Activated CD4-positive, alpha-beta T cell treated with anti-CD3 and anti-CD28 coated beads, Interleukin-2, amount 10 ng/mL, durations not matched to agents 24 days and 14 days (primary cell): ENCODE measurements at regions of chr16 and their contacts with region 1.

Region 1: GRCh38 chr16:30874821-30875717 is 18.8 kb downstream of the BCL7C start:
- DNase-seq: peak; percentile 97
- H3K4me3 Mint-ChIP-seq: peak overlapping the region; percentile 96
- H3K27ac Mint-ChIP-seq: peak overlapping the region; percentile 86
- H3K4me1 Mint-ChIP-seq: peaks cover 24% of the 10 kb centered on the region
- H3K27me3 Mint-ChIP-seq: no peaks in the 10 kb centered on the region

Region 2: GRCh38 chr16:30893744-30894539 is 18.9 kb after region 1 on chr16 and contains the start of gene BCL7C:
- intact Hi-C with region 1: loop called (anchors 1 kb)
- DNase-seq: peak; percentile 96
- H3K4me3 Mint-ChIP-seq: peak within 1 kb of the TSS; percentile 94
- H3K27ac Mint-ChIP-seq: peak within 1 kb of the TSS; percentile 90
- H3K4me1 Mint-ChIP-seq: peaks cover 35% of the 10 kb centered on the region
- H3K27me3 Mint-ChIP-seq: no peaks in the 10 kb centered on the region
- total RNA-seq, gene BCL7C: 23.9 and 24.5 TPM in 2 replicates

Region 3: GRCh38 chr16:30902029-30902972 is 27.2 kb after region 1 on chr16:
- intact Hi-C with region 1: loop called (anchors 1 kb)
- DNase-seq: peak; percentile 90
- H3K4me3 Mint-ChIP-seq: peak overlapping the region; percentile 92
- H3K27ac Mint-ChIP-seq: peak overlapping the region; percentile 99
- H3K4me1 Mint-ChIP-seq: peaks cover 28% of the 10 kb centered on the region
- H3K27me3 Mint-ChIP-seq: no peaks in the 10 kb centered on the region